A549 (cell line): ENCODE measurements at regions of chr17 and their contacts with region 1.

Region 1: DNA sequence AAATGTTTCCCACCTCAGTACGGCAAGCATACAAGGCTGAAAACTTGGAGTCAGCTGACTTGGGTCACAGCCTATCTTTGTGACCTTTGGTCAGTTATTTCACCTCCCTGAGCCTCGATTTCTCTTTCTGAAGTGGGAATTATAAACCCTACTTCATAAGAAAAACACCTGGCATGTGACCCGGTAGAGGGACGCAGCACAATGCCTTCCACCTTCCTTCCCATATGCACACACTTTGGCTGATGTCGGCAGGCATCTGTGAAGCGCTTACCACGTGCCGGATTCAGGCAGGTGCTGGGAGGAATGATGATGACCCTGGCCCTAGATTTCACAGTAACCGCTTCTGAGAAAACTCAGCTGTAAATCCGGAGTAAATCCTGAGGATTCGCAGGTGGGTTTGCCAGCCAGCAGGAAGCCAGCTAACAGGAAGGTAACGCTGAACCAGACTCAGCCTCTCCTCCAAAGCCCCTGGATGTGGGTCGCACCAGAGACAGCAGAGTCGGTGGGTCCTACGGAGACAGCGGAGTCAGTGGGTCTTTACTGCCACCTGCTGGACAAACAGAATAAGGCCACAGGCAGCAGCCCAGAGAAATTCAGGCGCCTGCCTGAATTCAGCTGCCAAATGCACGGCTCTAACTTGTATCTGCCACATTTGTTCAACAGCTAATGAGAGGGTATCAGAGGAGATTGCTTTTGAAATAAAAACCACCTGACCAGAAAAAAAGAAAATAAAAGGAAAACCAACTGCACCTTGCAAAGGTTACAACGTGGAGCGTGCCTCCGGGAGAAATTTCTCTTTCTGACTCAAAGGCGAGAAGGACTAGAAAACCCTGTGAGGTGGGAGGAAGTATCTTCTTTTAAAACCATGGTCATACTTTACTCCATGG is 16.6 kb downstream of the COPRS start:
- DNase-seq: peak; percentile 67 to 87
- ATAC-seq: peak; percentile 85 to 95
- H3K4me3 ChIP-seq: no peak overlapping the region; the same call in 2 of the 3 replicates
- H3K27ac ChIP-seq: peak overlapping the region in 1 of 2 experiments; percentile 68; a peak in 3 of 6 replicates
- H3K4me1 ChIP-seq: peaks cover 10% of the 10 kb centered on the region; the same call in 2 of the 3 replicates
- CTCF ChIP-seq: peak; percentile 99
- EP300 ChIP-seq: no peak
- POLR2A ChIP-seq: no peak
- RAD21 ChIP-seq: peak; percentile 98 to 99

Region 2: DNA sequence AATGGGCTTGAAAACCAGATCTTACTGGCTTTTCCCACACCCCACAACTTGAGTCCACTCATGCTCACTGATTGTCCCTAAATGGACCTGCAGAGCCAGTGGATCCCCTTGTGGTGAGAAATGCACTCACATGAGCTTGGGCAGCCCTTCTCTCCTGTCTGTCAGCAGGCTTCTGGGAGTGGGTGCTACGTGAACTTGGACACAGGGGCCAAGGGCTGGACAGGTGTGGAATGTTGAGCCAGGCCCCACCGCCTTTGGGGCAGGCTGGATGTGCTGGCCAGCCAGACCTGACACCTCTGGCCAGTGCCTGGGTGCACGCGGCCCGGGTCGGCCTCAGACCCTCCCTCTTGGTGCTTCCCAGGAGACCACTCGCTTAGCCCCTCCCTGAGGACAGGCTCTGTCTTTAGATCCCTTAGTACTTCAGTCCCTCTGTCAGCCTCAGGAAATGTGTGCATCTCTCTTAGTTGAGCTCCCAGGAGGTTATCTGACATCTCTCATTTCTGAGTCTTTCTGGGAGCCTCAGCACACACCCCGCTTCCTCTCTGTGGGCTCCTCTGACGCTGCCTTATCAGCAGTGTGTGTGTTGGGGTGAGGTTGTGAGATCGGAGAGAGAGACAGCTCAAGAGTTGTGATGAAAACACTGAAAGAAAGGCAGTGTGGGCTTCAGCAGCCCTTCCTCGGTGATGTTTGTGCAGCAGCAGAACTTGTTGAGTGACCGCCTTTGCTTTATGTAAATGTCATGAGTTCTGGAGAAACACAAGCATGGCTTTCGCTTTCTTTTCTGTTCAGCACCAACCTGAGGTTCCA is 333.9 kb before region 1 on chr17:
- CTCF ChIA-PET with region 1: interaction called, 11 read pairs
- POLR2A ChIA-PET with region 1: no interaction called
- DNase-seq: peak; percentile 31 to 41
- ATAC-seq: peak; percentile 56 to 82; a peak in 4 of 6 replicates
- H3K4me3 ChIP-seq: no peak overlapping the region
- H3K27ac ChIP-seq: no peak overlapping the region
- H3K4me1 ChIP-seq: no peaks in the 10 kb centered on the region
- CTCF ChIP-seq: no peak
- EP300 ChIP-seq: no peak
- POLR2A ChIP-seq: no peak
- RAD21 ChIP-seq: no peak

Region 3: DNA sequence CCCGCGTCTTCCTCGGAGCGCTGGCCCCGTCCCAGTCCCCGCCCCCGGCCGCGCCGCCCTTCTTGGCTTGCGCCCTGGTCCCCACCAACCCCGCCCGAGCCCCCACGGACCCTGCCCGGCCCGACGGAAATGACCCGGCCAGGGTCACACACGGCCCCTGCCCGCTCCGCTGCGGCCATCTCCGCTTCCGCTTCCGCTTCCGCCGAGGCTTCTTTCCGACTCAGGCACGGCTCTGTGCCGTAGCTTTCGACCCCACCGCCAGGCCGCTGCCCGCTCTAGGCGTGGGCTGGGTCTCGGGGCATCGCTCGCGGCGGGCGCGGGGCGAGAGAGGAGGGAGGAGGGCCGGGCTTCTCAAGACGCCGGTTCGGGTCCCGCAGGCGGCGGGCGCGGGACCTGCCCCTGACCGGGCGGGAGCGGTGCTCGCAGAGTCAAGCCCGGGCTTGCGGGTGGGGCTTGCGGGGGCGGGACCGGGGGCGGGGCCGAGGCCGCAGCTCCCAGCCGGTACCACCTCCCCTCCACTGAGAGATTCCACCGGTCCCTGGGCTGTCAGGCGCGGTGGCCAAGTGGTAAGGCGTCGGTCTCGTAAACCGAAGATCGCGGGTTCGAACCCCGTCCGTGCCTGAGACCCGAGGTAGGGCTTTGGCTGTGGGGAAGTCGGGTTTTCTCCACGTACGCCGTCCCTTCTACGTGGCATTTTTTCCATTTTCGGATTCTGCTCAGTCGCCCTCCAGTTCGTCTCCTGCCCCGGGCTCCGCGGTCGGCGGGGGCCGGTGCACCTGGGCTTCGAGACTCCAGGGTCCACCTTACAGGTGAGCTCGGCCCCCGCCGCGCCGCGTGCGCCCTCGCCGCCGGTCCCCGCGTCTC is 292.7 kb before region 1 on chr17:
- CTCF ChIA-PET with region 1: interaction called, 377 read pairs
- POLR2A ChIA-PET with region 1: interaction called, 5 read pairs
- DNase-seq: peak; percentile 87 to 95
- ATAC-seq: peak; percentile 83 to 90
- H3K4me3 ChIP-seq: peak overlapping the region; percentile 85
- H3K27ac ChIP-seq: peak overlapping the region; percentile 93 to 98
- H3K4me1 ChIP-seq: peaks cover 7% of the 10 kb centered on the region
- CTCF ChIP-seq: no peak
- EP300 ChIP-seq: no peak
- POLR2A ChIP-seq: peak; percentile 63
- RAD21 ChIP-seq: no peak; a peak in 1 of 5 replicates

Region 4: GRCh38 chr17:31581022-31581490 is 261.4 kb before region 1 on chr17:
- CTCF ChIA-PET with region 1: interaction called, 16 read pairs
- POLR2A ChIA-PET with region 1: no interaction called
- DNase-seq: no peak
- ATAC-seq: peak; percentile 22 to 52; a peak in 4 of 6 replicates
- H3K4me3 ChIP-seq: no peak overlapping the region
- H3K27ac ChIP-seq: peak overlapping the region in 1 of 2 experiments; percentile 12; a peak in 1 of 6 replicates
- H3K4me1 ChIP-seq: peaks cover 4% of the 10 kb centered on the region; the same call in 1 of the 3 replicates
- CTCF ChIP-seq: no peak
- EP300 ChIP-seq: no peak
- POLR2A ChIP-seq: no peak
- RAD21 ChIP-seq: no peak

Region 5: GRCh38 chr17:31696184-31696602 is 146.2 kb before region 1 on chr17:
- CTCF ChIA-PET with region 1: interaction called, 19 read pairs
- POLR2A ChIA-PET with region 1: no interaction called
- DNase-seq: no peak
- ATAC-seq: peak in 1 of 2 experiments; percentile 46; a peak in 2 of 6 replicates
- H3K4me3 ChIP-seq: no peak overlapping the region
- H3K27ac ChIP-seq: no peak overlapping the region
- H3K4me1 ChIP-seq: no peaks in the 10 kb centered on the region
- CTCF ChIP-seq: no peak
- EP300 ChIP-seq: no peak
- POLR2A ChIP-seq: no peak
- RAD21 ChIP-seq: no peak

Region 6: GRCh38 chr17:31858642-31859473 is 16.4 kb after region 1 on chr17 and contains the start of gene COPRS:
- CTCF ChIA-PET with region 1: interaction called, 130 read pairs
- POLR2A ChIA-PET with region 1: no interaction called
- DNase-seq: peak; percentile 81 to 87
- ATAC-seq: peak; percentile 82 to 91
- H3K4me3 ChIP-seq: peak within 1 kb of the TSS; percentile 95
- H3K27ac ChIP-seq: peak within 1 kb of the TSS; percentile 96 to 98
- H3K4me1 ChIP-seq: peaks cover 14% of the 10 kb centered on the region
- CTCF ChIP-seq: peak; percentile 26; the same call in 2 of the 3 replicates
- EP300 ChIP-seq: no peak
- POLR2A ChIP-seq: peak; percentile 88
- RAD21 ChIP-seq: 0 out of 5 replicates have a peak, but pooled peaks of 1 of the 2 experiments have one; percentile 24
- polyA plus RNA-seq, gene COPRS: 72.7 and 80.5 TPM in 2 replicates